Naive thymus-derived CD4-positive, alpha-beta T cell (primary cell): ENCODE measurements at regions of chr10 and their contacts with region 1.

Region 1: DNA sequence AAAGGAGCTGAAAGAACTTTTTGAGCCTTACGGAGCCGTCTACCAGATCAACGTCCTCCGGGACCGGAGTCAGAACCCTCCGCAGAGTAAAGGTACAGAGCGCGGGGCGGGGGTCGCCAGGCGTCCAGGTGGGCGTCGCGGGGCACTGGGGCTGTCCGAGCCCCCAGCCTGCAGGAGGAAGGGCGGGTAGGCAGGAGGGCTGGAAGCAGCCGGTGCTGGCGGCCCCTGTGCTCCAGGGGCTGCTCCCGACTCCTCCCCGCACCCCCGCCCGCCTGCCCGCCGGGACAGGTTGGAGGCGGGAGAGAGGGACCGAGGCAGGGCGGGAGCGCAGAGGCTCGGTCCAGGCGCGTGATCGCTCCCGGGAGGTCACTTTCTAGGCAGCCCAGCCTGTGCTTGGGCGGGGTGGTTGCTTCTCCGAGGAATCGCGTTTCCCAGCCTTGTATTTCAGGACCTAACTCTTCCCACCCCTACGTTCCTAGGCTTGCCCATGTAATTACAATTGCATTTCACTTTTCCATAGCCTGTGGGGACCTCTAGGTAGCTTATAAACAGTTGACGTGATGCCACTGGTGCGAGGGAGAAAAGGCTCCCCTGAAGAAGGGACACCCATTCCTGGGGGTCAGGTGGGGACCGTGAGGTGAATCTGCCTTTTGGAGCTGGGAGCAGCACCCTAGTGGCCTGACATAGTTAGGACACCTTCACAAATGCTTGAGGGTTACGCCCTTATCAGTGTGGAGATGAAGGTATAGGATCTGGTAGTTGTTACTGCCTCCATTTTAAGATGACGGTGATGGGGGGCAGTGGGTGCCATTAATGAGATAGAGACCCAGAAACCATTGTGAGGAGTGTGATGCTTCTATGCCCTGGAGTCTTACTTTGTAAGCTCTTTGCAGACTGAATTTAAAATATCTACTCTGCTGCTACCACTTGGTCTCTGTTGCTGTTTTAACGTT is 148.2 kb downstream of the CELF2 start:
- DNase-seq: peak in 8 of 9 donors; percentile 62 to 89 (median 81)
- ATAC-seq: peak; percentile 74
- H3K4me3 ChIP-seq: peak overlapping the region; percentile 92
- H3K4me3 Mint-ChIP-seq: peak overlapping the region in 4 of 10 donors; percentile 97 to 100 (median 99)
- H3K27ac ChIP-seq: peak overlapping the region; percentile 95
- H3K27ac Mint-ChIP-seq: peak overlapping the region in 5 of 9 donors; percentile 97 to 100 (median 98)
- H3K4me1 ChIP-seq: peaks cover 44 to 50% of the 10 kb centered on the region in 2 donors
- H3K4me1 Mint-ChIP-seq: peaks cover 34 to 39% (median 37%) of the 10 kb centered on the region in 7 donors
- H3K27me3 ChIP-seq: no peaks in the 10 kb centered on the region
- H3K27me3 Mint-ChIP-seq: no peaks in the 10 kb centered on the region

Region 2: DNA sequence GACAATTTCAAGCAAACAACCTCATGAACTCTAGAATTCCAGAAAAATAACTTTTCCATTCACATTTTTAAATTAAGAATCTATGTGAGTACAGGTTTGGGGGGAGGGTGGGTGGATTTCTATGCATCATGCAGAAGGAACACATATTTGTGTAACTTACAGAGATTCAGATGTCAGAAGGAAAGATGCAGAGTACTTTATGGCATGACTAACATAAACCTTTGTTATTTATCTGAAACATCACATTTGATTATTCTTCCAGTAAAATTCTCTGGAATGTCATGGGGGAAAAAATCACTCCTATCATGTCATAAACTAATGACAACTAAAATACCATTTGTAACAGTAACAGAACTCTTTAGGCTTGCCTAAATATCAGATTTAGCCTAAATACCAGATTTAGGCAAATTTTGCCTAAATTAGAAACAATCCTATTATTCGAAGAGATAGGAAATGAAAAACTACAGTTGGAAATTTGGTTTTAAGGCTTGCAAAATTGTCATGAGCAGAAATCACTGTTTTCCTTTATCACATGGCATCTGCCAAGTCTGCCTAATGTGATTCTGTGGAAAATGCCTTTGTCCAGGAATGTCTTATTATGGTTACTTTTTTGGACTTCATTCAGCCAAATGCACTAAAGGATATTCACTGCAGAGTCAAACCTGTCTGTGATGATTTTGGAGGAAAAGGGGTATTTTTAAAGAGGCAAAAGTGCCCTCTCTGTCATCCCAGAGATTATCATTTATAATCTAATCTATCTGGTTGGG is 675.9 kb before region 1 on chr10:
- CTCF ChIA-PET with region 1: no interaction called
- POLR2A ChIA-PET with region 1: no interaction called
- intact Hi-C with region 1: no loop called
- DNase-seq: no peak
- ATAC-seq: no peak
- H3K4me3 ChIP-seq: no peak overlapping the region
- H3K4me3 Mint-ChIP-seq: no peak overlapping the region
- H3K27ac ChIP-seq: no peak overlapping the region
- H3K27ac Mint-ChIP-seq: no peak overlapping the region
- H3K4me1 ChIP-seq: no peaks in the 10 kb centered on the region
- H3K4me1 Mint-ChIP-seq: no peaks in the 10 kb centered on the region
- H3K27me3 ChIP-seq: no peaks in the 10 kb centered on the region
- H3K27me3 Mint-ChIP-seq: peaks cover 0 to 69% (median 48%) of the 10 kb centered on the region in 5 donors

Region 3: GRCh38 chr10:11017570-11018431 is 148.1 kb before region 1 on chr10 and contains the start of gene CELF2:
- CTCF ChIA-PET with region 1: no interaction called
- POLR2A ChIA-PET with region 1: interaction called, 3 read pairs
- intact Hi-C with region 1: loop called (anchors 2 to 5 kb)
- DNase-seq: peak; percentile 35 to 62 (median 42)
- ATAC-seq: peak; percentile 80
- H3K4me3 ChIP-seq: peak within 1 kb of the TSS; percentile 40
- H3K4me3 Mint-ChIP-seq: peak within 1 kb of the TSS; percentile 69 to 91 (median 80)
- H3K27ac ChIP-seq: no peak within 1 kb of the TSS
- H3K27ac Mint-ChIP-seq: peak within 1 kb of the TSS in 2 of 9 donors; percentile 32 to 70
- H3K4me1 ChIP-seq: peaks cover 4% of the 10 kb centered on the region in 2 donors
- H3K4me1 Mint-ChIP-seq: peaks cover 0 to 17% (median 11%) of the 10 kb centered on the region in 7 donors
- H3K27me3 ChIP-seq: peaks cover 5 to 21% of the 10 kb centered on the region in 2 donors
- H3K27me3 Mint-ChIP-seq: peaks cover 69 to 88% (median 74%) of the 10 kb centered on the region in 5 donors
- total RNA-seq, gene CELF2: 135 to 207 (median 178) TPM

Region 4: GRCh38 chr10:11113156-11113555 is 52.7 kb before region 1 on chr10:
- CTCF ChIA-PET with region 1: interaction called, 39 read pairs
- POLR2A ChIA-PET with region 1: interaction called, 133 read pairs
- intact Hi-C with region 1: loop called (anchors 1 kb)
- DNase-seq: peak in 7 of 9 donors; percentile 48 to 69 (median 65)
- ATAC-seq: peak; percentile 97
- H3K4me3 ChIP-seq: no peak overlapping the region
- H3K4me3 Mint-ChIP-seq: peak overlapping the region in 9 of 10 donors; percentile 12 to 85 (median 63)
- H3K27ac ChIP-seq: peak overlapping the region; percentile 9
- H3K27ac Mint-ChIP-seq: peak overlapping the region in 8 of 9 donors; percentile 0 to 92 (median 72)
- H3K4me1 ChIP-seq: peaks cover 0 to 9% of the 10 kb centered on the region in 2 donors
- H3K4me1 Mint-ChIP-seq: peaks cover 10 to 56% (median 38%) of the 10 kb centered on the region in 7 donors
- H3K27me3 ChIP-seq: no peaks in the 10 kb centered on the region
- H3K27me3 Mint-ChIP-seq: peaks cover 0 to 5% (median 0%) of the 10 kb centered on the region in 5 donors

Region 5: GRCh38 chr10:11154333-11154732 is 11.5 kb before region 1 on chr10:
- CTCF ChIA-PET with region 1: interaction called, 57 read pairs
- POLR2A ChIA-PET with region 1: interaction called, 919 read pairs
- intact Hi-C with region 1: loop called (anchors 1 kb)
- DNase-seq: no peak
- ATAC-seq: no peak
- H3K4me3 ChIP-seq: no peak overlapping the region
- H3K4me3 Mint-ChIP-seq: peak overlapping the region; percentile 30 to 88 (median 67)
- H3K27ac ChIP-seq: peak overlapping the region; percentile 94
- H3K27ac Mint-ChIP-seq: peak overlapping the region in 8 of 9 donors; percentile 97 to 99 (median 98)
- H3K4me1 ChIP-seq: peaks cover 39 to 87% of the 10 kb centered on the region in 2 donors
- H3K4me1 Mint-ChIP-seq: peaks cover 74 to 100% (median 100%) of the 10 kb centered on the region in 7 donors
- H3K27me3 ChIP-seq: no peaks in the 10 kb centered on the region
- H3K27me3 Mint-ChIP-seq: no peaks in the 10 kb centered on the region

Region 6: GRCh38 chr10:11225935-11226334 is 60.1 kb after region 1 on chr10:
- CTCF ChIA-PET with region 1: interaction called, 5 read pairs
- POLR2A ChIA-PET with region 1: interaction called, 25 read pairs
- intact Hi-C with region 1: loop called (anchors 2 to 5 kb)
- DNase-seq: peak in 5 of 9 donors; percentile 34 to 61 (median 47)
- ATAC-seq: peak; percentile 85
- H3K4me3 ChIP-seq: peak overlapping the region; percentile 19
- H3K4me3 Mint-ChIP-seq: peak overlapping the region in 9 of 10 donors; percentile 47 to 76 (median 67)
- H3K27ac ChIP-seq: peak overlapping the region; percentile 59
- H3K27ac Mint-ChIP-seq: peak overlapping the region; percentile 84 to 96 (median 87)
- H3K4me1 ChIP-seq: peaks cover 69 to 80% of the 10 kb centered on the region in 2 donors
- H3K4me1 Mint-ChIP-seq: peaks cover 65 to 100% (median 95%) of the 10 kb centered on the region in 7 donors
- H3K27me3 ChIP-seq: no peaks in the 10 kb centered on the region
- H3K27me3 Mint-ChIP-seq: no peaks in the 10 kb centered on the region

Region 7: GRCh38 chr10:11270135-11270857 is 104.4 kb after region 1 on chr10:
- CTCF ChIA-PET with region 1: interaction called, 3 read pairs
- POLR2A ChIA-PET with region 1: interaction called, 4 read pairs
- intact Hi-C with region 1: loop called in 1 of 2 experiments (anchors 1 kb)
- DNase-seq: peak; percentile 24 to 68 (median 56)
- ATAC-seq: peak; percentile 90
- H3K4me3 ChIP-seq: no peak overlapping the region
- H3K4me3 Mint-ChIP-seq: peak overlapping the region in 2 of 10 donors; percentile 29 to 54
- H3K27ac ChIP-seq: no peak overlapping the region
- H3K27ac Mint-ChIP-seq: peak overlapping the region in 8 of 9 donors; percentile 24 to 83 (median 70)
- H3K4me1 ChIP-seq: peaks cover 0 to 4% of the 10 kb centered on the region in 2 donors
- H3K4me1 Mint-ChIP-seq: peaks cover 33 to 75% (median 66%) of the 10 kb centered on the region in 7 donors
- H3K27me3 ChIP-seq: no peaks in the 10 kb centered on the region
- H3K27me3 Mint-ChIP-seq: no peaks in the 10 kb centered on the region

Region 8: DNA sequence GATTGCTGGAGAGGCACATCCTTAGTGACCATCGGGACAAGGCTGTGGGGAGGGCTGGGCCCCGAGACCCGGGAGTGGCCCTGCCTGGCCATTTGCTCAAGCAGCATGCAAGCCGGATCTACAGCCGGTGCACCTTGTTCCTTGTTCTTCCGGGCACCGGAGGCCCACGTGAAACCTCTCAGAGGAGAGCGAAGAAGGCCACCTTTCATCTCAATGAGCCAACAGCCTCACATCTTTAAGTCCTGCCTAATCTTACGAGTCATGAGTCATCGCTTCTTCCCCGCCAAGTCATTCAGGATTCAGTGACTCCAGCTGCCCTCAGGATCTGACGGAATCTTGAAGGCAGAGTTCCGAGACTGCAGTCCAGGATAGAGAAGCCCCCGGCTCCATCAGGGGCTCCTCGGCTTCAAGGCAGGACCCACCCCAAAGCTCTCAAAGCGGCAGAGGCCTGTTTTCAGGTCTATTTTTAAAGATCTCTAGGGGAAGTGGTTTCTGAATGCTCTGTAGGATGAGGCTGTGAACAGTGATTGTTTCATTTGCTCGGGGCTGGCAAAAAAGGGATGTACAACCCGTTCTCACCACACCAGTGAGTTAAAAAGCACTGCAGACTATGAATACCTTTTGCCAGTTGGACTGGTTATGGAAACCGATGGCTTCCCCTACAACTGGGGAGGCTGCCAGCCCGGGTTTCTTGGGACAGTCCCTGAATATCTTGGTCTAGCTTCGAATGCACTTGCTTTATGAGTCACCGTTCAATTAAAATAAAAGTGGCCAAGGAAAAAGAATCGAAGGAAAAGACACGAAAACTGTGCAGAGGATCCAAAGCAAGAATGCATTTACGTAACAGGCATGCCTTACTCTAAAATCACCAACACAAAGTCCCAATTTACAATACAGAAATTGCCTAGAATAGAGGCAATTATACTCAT is 519.1 kb after region 1 on chr10:
- CTCF ChIA-PET with region 1: no interaction called
- POLR2A ChIA-PET with region 1: interaction called, 5 read pairs
- intact Hi-C with region 1: loop called in 1 of 2 experiments (anchors 5 kb)
- DNase-seq: peak; percentile 45 to 89 (median 83)
- ATAC-seq: peak; percentile 86
- H3K4me3 ChIP-seq: peak overlapping the region; percentile 49
- H3K4me3 Mint-ChIP-seq: peak overlapping the region; percentile 82 to 91 (median 89)
- H3K27ac ChIP-seq: peak overlapping the region; percentile 78
- H3K27ac Mint-ChIP-seq: peak overlapping the region; percentile 92 to 99 (median 97)
- H3K4me1 ChIP-seq: peaks cover 26 to 51% of the 10 kb centered on the region in 2 donors
- H3K4me1 Mint-ChIP-seq: peaks cover 25 to 85% (median 78%) of the 10 kb centered on the region in 7 donors
- H3K27me3 ChIP-seq: no peaks in the 10 kb centered on the region
- H3K27me3 Mint-ChIP-seq: peaks cover 0 to 67% (median 0%) of the 10 kb centered on the region in 5 donors